ENCODE measurements at regions of chr3 and their contacts with region 1.

Region 1: GRCh38 chr3:119034256-119035013 is at the start of gene IGSF11:
- DNase-seq: peak; percentile 90
- H3K4me3 Mint-ChIP-seq: peak within 1 kb of the TSS; percentile 85
- H3K27ac Mint-ChIP-seq: no peak within 1 kb of the TSS
- H3K4me1 Mint-ChIP-seq: peaks cover 8% of the 10 kb centered on the region
- H3K27me3 Mint-ChIP-seq: peaks cover 58% of the 10 kb centered on the region
- total RNA-seq, gene IGSF11: 0.47 TPM in 1 of 2 replicates, not detected in the other

Region 2: GRCh38 chr3:118817748-118818165 is 216.7 kb before region 1 on chr3:
- intact Hi-C with region 1: no loop called
- DNase-seq: peak; percentile 79
- H3K4me3 Mint-ChIP-seq: no peak overlapping the region
- H3K27ac Mint-ChIP-seq: no peak overlapping the region
- H3K4me1 Mint-ChIP-seq: no peaks in the 10 kb centered on the region
- H3K27me3 Mint-ChIP-seq: peaks cover 10% of the 10 kb centered on the region

Region 3: DNA sequence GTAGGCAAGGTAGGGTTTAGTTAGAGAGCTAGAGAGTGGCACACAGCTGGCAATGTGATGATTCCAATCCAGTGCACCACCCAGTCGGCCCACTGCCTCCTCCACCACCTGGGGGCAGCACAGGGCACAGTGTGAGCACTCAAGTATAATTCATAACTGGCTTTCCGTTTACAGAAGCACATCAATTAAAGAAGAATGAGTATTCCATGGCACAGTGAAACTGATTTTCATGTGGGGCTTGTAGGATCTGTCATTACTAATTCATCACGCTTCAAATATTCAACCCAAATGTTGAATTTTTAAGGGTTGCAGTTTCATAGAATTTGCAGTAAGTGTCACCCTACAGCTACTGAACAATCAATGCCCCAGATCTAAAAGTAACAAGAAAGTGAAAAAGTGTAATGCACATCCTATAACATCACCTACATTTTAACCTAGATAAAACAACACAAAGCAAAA is 149.7 kb before region 1 on chr3:
- intact Hi-C with region 1: loop called (anchors 1 kb)
- DNase-seq: peak; percentile 92
- H3K4me3 Mint-ChIP-seq: no peak overlapping the region
- H3K27ac Mint-ChIP-seq: no peak overlapping the region
- H3K4me1 Mint-ChIP-seq: peaks cover 2% of the 10 kb centered on the region
- H3K27me3 Mint-ChIP-seq: peaks cover 19% of the 10 kb centered on the region

Region 4: DNA sequence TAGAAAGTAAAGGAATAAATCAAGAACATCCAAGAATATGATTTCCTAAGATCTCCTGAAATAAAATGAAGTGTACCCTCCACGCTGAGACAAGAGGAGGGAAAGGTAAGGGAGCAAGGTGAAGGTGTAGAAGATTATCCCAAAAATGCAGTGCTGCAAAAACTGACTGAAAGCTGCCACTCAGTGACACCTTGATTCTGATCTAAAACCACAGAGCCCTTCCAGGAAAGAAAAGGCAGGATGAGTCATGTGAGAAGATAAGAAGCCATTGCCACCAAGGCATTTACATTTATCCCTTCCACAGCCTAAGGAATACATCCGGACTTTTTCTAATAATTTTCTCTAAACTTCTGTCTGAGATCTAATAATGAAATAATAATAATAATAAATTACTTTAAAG is 49.7 kb before region 1 on chr3:
- intact Hi-C with region 1: loop called (anchors 5 kb)
- DNase-seq: no peak
- H3K4me3 Mint-ChIP-seq: no peak overlapping the region
- H3K27ac Mint-ChIP-seq: no peak overlapping the region
- H3K4me1 Mint-ChIP-seq: peaks cover 12% of the 10 kb centered on the region
- H3K27me3 Mint-ChIP-seq: peaks cover 15% of the 10 kb centered on the region

Region 5: DNA sequence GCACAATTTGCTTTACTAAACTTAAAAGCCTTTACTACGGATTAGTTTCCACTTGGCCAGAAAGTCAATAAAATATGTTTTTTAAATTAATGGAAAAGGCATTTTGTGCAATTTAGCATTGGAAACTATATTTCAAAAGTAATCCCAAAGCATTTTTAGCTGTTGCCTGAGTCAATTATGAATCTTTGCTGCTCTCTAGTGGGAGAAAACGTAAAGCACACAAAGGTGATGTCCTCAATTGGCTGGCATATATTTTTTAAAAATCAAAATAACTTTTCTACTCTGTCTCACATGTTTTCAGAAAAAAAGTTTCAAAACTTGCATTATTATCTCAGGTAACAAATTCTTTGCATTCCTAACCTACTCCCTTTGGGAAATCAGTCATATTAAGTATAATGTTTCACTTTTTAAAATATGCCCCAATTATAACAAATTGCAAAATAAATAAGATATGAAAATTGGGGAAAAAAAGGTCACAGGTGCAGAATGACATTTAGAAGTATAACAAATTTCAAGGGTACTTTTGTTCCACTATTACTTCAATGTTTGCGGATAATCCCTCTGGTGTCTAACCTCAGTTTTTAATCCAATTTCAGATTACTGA is 64.3 kb after region 1 on chr3:
- intact Hi-C with region 1: loop called (anchors 5 kb)
- DNase-seq: peak; percentile 77
- H3K4me3 Mint-ChIP-seq: no peak overlapping the region
- H3K27ac Mint-ChIP-seq: no peak overlapping the region
- H3K4me1 Mint-ChIP-seq: no peaks in the 10 kb centered on the region
- H3K27me3 Mint-ChIP-seq: no peaks in the 10 kb centered on the region

Region 6: DNA sequence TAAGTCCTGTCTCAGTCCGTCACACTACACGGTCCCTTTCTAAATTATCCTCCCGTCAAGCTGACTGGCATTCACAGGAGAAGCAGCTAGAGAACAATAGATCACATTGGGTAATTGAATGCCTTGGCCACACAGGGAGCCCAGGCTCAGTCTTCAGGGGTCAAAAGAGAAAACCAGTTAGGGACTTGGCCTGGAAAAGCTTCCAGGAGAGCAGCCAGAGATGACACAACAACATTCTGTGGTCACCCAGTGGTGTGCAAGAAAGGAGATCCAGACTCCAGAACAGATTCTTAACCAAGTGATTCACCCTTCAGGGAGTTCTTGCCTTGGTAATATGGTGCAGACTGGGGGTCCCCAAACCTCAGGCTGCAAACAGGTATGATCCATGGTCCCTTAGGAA is 275.6 kb after region 1 on chr3:
- intact Hi-C with region 1: no loop called
- DNase-seq: no peak
- H3K4me3 Mint-ChIP-seq: no peak overlapping the region
- H3K27ac Mint-ChIP-seq: no peak overlapping the region
- H3K4me1 Mint-ChIP-seq: peaks cover 15% of the 10 kb centered on the region
- H3K27me3 Mint-ChIP-seq: peaks cover 10% of the 10 kb centered on the region

Region 7: DNA sequence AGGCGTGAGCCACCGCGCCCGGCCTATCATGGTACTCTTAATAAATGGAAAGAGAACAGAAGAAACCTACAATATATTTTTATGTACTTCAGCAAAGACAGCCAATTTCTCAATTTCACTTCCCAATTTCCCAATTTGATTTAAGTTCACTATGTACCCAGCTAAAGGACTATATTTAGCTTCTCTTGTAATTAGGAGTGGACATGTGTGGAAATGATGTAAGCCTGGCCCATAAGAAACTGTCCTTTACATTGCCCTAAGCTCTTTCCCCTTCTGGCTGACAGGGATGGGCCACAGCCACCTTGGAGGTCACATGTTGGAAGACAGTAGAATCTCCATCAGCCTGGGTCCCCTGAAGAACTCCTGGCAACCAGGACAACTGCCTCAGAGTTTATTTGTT is 422.8 kb after region 1 on chr3:
- intact Hi-C with region 1: no loop called
- DNase-seq: no peak
- H3K4me3 Mint-ChIP-seq: no peak overlapping the region
- H3K27ac Mint-ChIP-seq: no peak overlapping the region
- H3K4me1 Mint-ChIP-seq: peaks cover 20% of the 10 kb centered on the region
- H3K27me3 Mint-ChIP-seq: no peaks in the 10 kb centered on the region

Measured in activated CD4-positive, alpha-beta T cell treated with anti-CD3 and anti-CD28 coated beads, Interleukin-2, amount 10 ng/mL, durations not matched to agents 24 days and 14 days (primary cell).